Activated CD4-positive, alpha-beta memory T cell treated with anti-CD3 and anti-CD28 coated beads for 36 hours (primary cell): ENCODE measurements at regions of chr12 and their contacts with region 1.

Region 1: GRCh38 chr12:5022465-5023061 is 21.1 kb upstream of the KCNA5 start:
- DNase-seq: peak; percentile 47
- H3K4me3 Mint-ChIP-seq: no peak overlapping the region
- H3K27ac Mint-ChIP-seq: no peak overlapping the region
- H3K4me1 Mint-ChIP-seq: no peaks in the 10 kb centered on the region
- H3K27me3 Mint-ChIP-seq: peaks cover 17% of the 10 kb centered on the region

Region 2: DNA sequence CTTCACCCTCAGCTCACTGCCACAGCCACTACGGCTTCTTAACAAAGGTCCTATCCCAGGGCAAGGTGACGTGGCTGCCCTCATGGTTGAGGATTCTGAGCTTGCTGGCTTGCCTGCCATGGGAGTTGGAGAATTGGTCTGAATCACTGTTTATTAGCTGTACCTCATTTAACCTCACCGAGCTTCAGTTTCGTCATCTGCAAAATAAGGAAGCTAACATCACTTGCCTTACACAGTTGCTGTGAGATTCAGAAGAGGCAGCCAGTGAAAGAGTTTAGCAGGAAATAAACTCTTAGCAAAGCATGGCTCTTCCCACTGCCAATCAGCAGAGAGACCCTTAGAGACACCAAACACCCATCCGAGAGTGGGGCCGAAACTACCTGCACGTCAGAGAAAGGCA is 202.9 kb before region 1 on chr12:
- CTCF ChIA-PET with region 1: no interaction called
- POLR2A ChIA-PET with region 1: no interaction called
- intact Hi-C with region 1: no loop called
- DNase-seq: no peak
- H3K4me3 Mint-ChIP-seq: no peak overlapping the region
- H3K27ac Mint-ChIP-seq: no peak overlapping the region
- H3K4me1 Mint-ChIP-seq: peaks cover 13% of the 10 kb centered on the region
- H3K27me3 Mint-ChIP-seq: no peaks in the 10 kb centered on the region

Region 3: DNA sequence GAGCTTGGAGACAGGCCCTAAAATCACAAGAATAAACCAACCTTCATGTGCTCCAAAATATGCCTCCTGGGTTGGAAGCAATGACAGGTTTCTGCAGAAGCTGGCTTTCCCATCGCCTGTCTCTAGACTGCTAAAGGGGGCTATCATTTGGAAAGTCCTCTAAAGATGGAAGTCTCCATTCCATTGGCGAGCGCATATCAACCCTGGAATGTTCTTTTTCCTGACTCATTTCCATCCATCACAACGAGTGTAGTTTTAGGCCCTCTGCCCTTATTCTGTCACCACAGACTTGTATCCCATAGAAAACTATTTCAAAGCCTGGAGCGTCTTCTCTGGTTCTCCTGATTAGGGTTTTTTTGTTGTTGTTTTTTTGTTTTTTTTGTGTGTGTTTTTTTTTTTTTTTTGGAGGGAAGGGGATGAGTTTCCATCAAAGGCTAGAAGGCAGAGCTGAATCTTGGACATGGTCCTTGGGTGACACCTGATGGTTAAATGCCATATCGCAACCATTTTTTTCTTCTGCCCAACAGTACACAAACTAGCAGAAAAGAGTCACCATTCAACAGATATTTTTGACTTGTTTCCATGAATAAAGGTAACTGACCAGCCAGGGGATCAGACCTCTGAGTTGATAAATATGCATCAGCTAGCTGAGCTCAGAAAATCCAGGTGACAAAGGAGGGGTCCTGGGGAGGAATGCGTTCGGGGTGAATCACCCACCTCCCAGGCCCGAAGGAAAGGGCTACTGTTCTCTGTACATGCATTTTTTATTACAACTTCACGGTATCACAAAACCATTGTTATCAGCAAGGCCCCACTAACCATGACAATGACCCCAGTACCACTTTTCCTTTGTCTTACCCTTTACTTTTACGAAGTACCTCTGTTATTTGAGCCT is 61.6 kb after region 1 on chr12:
- CTCF ChIA-PET with region 1: interaction called, 14 read pairs
- POLR2A ChIA-PET with region 1: interaction called, 3 read pairs
- intact Hi-C with region 1: loop called (anchors 1 kb)
- DNase-seq: peak; percentile 16
- H3K4me3 Mint-ChIP-seq: no peak overlapping the region
- H3K27ac Mint-ChIP-seq: no peak overlapping the region
- H3K4me1 Mint-ChIP-seq: no peaks in the 10 kb centered on the region
- H3K27me3 Mint-ChIP-seq: no peaks in the 10 kb centered on the region